Activated CD4-positive, alpha-beta T cell treated with anti-CD3 and anti-CD28 coated beads for 36 hours (primary cell): ENCODE measurements at regions of chr17 and their contacts with region 1.

Region 1: GRCh38 chr17:46719891-46720290 is 98.6 kb downstream of the WNT3 start:
- DNase-seq: no peak
- ATAC-seq: no peak
- H3K4me3 Mint-ChIP-seq: no peak overlapping the region
- H3K27ac Mint-ChIP-seq: no peak overlapping the region
- H3K4me1 Mint-ChIP-seq: no peaks in the 10 kb centered on the region
- H3K27me3 Mint-ChIP-seq: no peaks in the 10 kb centered on the region

Region 2: GRCh38 chr17:46742565-46743270 is 22.8 kb after region 1 on chr17:
- CTCF ChIA-PET with region 1: no interaction called
- POLR2A ChIA-PET with region 1: no interaction called
- intact Hi-C with region 1: no loop called
- DNase-seq: peak; percentile 44
- ATAC-seq: peak; percentile 70
- H3K4me3 Mint-ChIP-seq: no peak overlapping the region
- H3K27ac Mint-ChIP-seq: no peak overlapping the region
- H3K4me1 Mint-ChIP-seq: peaks cover 6% of the 10 kb centered on the region
- H3K27me3 Mint-ChIP-seq: no peaks in the 10 kb centered on the region

Region 3: DNA sequence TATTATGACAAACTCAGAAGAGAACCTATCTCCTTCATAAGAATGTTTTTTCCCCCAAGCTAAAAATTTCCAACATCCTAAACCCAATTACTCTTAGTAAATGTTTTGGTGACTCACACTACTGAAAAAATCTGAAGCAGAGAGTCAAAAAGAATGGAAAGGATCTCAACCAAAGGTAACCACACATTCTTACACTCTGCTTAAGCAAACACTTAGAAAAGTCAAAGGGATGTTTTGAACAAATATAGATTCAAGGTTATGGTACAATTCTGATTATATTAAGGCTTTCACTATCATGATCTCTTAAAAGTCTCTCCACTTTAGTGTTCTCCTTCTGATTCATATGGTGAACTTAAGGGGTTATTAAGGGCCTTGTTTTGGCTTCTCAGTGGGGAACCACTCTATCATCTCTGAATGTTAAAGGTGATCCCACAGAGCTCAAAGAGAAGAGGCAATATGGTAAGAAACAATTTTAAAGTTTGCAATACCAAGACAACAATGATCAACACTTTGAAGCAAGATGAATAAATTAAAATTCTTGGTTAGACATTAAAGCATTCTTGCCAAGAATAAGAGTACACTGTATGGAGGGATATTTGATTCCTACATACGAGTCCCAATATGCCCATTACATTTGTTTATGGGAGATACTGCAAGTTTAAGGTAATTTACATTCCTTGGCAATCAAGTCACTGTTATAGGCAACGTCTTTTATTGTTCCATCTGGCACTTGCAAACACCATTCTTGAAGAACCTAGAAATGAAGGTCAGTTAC is 400.0 kb after region 1 on chr17:
- CTCF ChIA-PET with region 1: no interaction called
- POLR2A ChIA-PET with region 1: no interaction called
- intact Hi-C with region 1: loop called in 1 of 2 experiments (anchors 10 kb)
- DNase-seq: no peak
- ATAC-seq: peak; percentile 91
- H3K4me3 Mint-ChIP-seq: no peak overlapping the region
- H3K27ac Mint-ChIP-seq: peak overlapping the region; percentile 44
- H3K4me1 Mint-ChIP-seq: peaks cover 16% of the 10 kb centered on the region
- H3K27me3 Mint-ChIP-seq: no peaks in the 10 kb centered on the region